HEK293 (cell line): ENCODE measurements at regions of chr20 and their contacts with region 1.

Region 1: DNA sequence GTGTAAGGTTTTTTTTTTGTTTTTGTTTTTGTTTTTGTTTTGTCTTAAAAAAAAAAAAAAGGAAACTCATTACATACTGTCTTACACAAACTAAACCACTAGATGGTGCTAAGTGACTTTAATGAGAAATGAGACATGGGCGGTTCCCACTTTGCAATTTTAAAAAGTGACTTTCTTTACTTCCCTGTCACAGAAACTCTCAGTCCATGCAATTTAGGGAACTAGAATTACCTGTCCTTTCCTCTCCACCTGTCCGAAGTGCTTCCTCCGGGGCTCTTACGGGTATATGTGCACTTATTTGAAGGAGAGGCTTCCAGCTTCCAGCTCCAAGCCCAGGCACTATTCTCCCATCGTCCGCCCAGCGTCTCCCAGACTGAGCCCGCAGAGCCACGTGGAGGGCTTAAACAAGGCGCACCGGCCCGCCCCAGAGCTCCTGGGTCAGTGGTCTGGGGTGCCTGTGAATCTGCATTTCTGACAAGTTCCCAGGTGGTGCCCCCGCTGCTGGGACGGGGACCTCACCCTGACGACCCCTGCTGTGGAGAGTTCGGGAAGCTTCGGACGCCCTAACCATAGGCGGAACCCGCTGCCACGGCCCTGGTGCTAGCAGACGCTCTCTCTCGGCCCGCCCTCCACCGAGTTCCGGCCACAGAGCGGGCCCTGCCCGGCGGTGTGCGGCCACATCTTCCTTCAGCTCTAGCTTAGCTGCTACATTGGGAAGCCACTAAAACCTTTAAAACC is 26.1 kb downstream of the BFSP1 start:
- H3K4me3 ChIP-seq: no peak overlapping the region
- H3K27ac ChIP-seq: no peak overlapping the region
- H3K4me1 ChIP-seq: no peaks in the 10 kb centered on the region
- CTCF ChIP-seq: no peak

Region 2: GRCh38 chr20:17357218-17357617 is 147.8 kb before region 1 on chr20:
- CTCF ChIA-PET with region 1: no interaction called
- POLR2A ChIA-PET with region 1: no interaction called
- H3K4me3 ChIP-seq: no peak overlapping the region
- H3K27ac ChIP-seq: no peak overlapping the region
- H3K4me1 ChIP-seq: no peaks in the 10 kb centered on the region
- CTCF ChIP-seq: no peak

Region 3: GRCh38 chr20:17494201-17494600 is 10.9 kb before region 1 on chr20:
- CTCF ChIA-PET with region 1: interaction called, 10 read pairs
- POLR2A ChIA-PET with region 1: no interaction called
- H3K4me3 ChIP-seq: no peak overlapping the region
- H3K27ac ChIP-seq: no peak overlapping the region
- H3K4me1 ChIP-seq: no peaks in the 10 kb centered on the region
- CTCF ChIP-seq: no peak

Region 4: DNA sequence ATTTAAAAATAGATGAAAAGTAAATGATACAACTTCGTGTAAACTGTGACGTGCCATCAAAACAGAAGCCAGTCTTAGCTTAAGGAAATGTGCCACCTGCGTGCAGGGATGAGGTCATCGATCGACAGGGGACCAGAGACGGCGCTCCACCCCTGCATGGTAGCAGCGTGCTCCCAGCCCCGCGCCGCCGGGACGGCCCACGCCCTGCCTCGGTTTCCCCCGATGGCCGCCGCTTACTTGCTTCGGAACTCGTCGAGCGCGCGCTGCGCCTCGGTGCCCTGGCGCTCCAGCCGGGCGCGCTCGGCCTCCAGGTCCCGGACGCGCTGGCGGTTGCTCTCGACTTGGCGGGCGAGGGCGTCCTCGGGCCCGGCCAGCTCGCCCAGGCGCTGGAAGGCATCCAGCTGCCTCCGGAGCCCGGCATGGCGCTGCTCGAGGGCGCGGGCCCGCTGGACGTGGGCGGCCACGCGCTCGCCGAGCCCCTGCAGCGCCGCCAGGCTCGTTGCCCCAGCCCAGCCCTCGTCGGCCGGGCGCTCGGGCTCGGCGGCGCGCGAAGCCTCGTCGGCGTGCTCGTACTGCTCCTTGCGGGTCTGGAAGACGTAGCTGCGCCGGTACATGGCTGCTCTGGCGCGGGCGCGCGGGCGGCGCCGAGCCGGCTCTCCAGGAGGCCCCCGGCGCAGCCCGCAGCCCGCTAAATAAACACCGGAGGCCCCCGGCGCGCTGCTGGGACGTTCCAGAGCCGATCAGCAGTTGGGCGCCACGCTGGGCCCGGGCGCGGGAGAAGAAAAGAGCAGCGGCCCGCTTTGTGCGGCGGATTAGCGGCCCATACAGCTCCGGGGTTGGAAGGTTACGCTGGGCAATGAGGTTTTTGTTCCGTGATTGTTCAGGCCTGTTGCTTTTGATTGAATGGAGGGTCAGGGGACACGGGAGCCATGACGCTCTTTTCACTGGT is 25.9 kb after region 1 on chr20 and contains the start of gene BFSP1:
- CTCF ChIA-PET with region 1: interaction called, 11 read pairs
- POLR2A ChIA-PET with region 1: no interaction called
- H3K4me3 ChIP-seq: peak within 1 kb of the TSS; percentile 51
- H3K27ac ChIP-seq: peak within 1 kb of the TSS; percentile 90
- H3K4me1 ChIP-seq: peaks cover 6% of the 10 kb centered on the region
- CTCF ChIP-seq: no peak

Region 5: GRCh38 chr20:17617551-17618223 is 112.6 kb after region 1 on chr20:
- CTCF ChIA-PET with region 1: interaction called, 17 read pairs
- POLR2A ChIA-PET with region 1: no interaction called
- H3K4me3 ChIP-seq: no peak overlapping the region
- H3K27ac ChIP-seq: no peak overlapping the region
- H3K4me1 ChIP-seq: no peaks in the 10 kb centered on the region
- CTCF ChIP-seq: peak; percentile 54

Region 6: DNA sequence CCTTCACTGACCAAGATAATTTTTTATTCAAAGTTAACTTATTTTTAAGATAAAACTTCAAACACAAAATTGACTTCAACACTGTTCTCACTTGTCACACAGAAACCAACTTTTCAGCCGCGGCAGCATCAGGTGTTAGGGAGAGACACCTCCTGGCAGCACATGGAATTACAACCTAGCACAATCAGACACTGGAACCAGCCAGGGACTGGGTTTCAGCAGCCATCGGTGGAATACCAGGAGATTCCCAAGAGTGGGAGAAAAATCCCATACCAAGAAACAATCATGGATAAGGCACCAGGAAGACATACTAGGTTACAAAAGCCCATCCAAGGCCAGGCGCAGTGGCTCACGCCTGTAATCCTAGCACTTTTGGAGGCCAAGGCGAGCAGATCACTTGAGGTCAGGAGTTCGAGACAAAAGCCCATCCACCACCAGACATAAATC is 393.5 kb after region 1 on chr20:
- CTCF ChIA-PET with region 1: interaction called, 11 read pairs
- POLR2A ChIA-PET with region 1: no interaction called
- H3K4me3 ChIP-seq: no peak overlapping the region
- H3K27ac ChIP-seq: no peak overlapping the region
- H3K4me1 ChIP-seq: no peaks in the 10 kb centered on the region
- CTCF ChIP-seq: no peak

Region 7: DNA sequence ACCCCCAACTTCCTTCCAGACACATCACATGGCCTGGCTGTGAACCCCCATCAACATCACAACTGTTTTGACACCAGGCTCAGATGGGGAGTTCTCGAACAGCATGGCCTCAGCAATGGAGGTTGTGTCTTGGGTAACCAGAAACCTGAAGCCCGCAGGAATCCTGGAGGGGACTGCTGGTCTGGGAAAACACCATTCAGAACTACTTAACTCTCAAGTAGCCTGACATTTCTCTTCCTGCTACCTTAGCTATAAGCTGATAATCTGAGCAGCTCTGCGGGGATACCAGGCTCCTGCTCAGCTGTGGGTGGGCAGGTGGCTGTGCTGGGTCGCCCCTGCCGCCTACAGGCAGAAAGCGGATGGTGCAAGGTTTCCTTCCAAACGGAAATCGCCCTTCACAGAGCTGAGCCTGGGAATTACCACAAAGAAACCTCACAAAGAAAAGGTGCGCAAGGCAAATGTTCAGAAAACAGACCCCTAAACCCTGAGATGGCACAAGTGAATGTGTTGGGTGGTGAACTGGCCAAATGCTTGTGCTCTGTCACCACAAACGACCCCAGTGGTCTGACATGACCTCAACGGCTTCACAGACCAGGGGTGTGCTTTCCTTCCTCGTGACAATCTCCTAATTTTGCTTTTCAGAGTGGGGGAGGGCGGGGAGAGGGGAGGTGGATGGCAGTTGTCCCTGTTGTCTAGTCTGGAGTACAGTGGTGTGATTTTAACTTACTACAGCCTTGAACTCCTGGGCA is 434.0 kb after region 1 on chr20:
- CTCF ChIA-PET with region 1: interaction called, 11 read pairs
- POLR2A ChIA-PET with region 1: no interaction called
- H3K4me3 ChIP-seq: no peak overlapping the region
- H3K27ac ChIP-seq: peak overlapping the region; percentile 19; the same call in 1 of the 2 replicates
- H3K4me1 ChIP-seq: peaks cover 5% of the 10 kb centered on the region; the same call in 1 of the 2 replicates
- CTCF ChIP-seq: peak; percentile 60